ENCODE measurements at regions of chr22 and their contacts with region 1.

Region 1: DNA sequence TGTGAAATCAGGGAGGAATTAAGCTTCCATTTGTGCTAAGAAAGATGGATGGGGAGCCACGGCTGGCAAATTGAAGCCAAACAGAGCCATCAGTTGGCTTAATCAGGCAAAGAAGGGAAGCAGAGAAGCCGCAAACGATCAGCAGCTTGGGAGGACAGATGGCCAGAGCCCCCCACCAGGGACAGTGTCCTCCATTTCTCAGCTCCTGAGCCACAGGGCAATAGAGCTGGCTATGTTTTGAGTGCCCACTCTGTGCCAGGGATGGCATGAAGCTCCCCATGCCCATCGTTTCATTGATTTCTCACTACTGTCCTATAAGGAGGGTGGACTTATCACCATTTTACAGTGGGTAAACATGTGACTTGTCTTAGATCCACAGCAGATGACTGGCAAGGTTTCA is 126.3 kb upstream of the ASPHD2 start:
- DNase-seq: no peak
- ATAC-seq: no peak
- H3K4me3 ChIP-seq: no peak overlapping the region
- H3K27ac ChIP-seq: no peak overlapping the region
- H3K4me1 ChIP-seq: peaks cover 8% of the 10 kb centered on the region
- H3K27me3 ChIP-seq: peaks cover 0 to 16% of the 10 kb centered on the region in 2 experiments; a peak in 2 of 5 replicates
- CTCF ChIP-seq: no peak
- EP300 ChIP-seq: no peak
- POLR2A ChIP-seq: no peak
- RAD21 ChIP-seq: no peak

Region 2: DNA sequence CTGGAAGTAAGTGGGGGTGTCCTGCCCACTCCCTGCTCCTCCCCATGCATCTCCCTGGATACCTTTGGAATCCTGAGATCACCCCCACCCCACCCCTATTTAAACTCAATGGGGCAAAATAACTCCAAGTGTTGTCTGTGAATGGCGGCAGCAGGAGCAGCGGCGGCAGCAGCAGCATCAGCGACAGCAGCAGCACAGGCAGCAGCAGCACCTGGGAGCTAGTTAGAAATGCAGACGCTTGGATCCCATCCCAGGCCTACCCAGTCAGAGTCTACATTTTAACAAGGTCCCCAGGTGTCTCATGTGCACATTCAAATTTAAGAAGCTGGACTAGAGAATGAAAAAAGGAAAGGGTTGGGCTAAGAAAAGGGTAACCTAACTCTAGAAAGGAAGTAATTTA is 50.9 kb before region 1 on chr22:
- CTCF ChIA-PET with region 1: no interaction called
- POLR2A ChIA-PET with region 1: no interaction called
- in situ Hi-C with region 1: no loop called
- intact Hi-C with region 1: loop called (anchors 5 kb)
- DNase-seq: no peak
- ATAC-seq: no peak
- H3K4me3 ChIP-seq: no peak overlapping the region
- H3K27ac ChIP-seq: no peak overlapping the region
- H3K4me1 ChIP-seq: no peaks in the 10 kb centered on the region
- H3K27me3 ChIP-seq: no peaks in the 10 kb centered on the region
- CTCF ChIP-seq: no peak
- EP300 ChIP-seq: no peak
- POLR2A ChIP-seq: no peak
- RAD21 ChIP-seq: no peak

Measured in HepG2 (cell line).